Mammary epithelial cell (primary cell): ENCODE measurements at regions of chr1 and their contacts with region 1.

Region 1: DNA sequence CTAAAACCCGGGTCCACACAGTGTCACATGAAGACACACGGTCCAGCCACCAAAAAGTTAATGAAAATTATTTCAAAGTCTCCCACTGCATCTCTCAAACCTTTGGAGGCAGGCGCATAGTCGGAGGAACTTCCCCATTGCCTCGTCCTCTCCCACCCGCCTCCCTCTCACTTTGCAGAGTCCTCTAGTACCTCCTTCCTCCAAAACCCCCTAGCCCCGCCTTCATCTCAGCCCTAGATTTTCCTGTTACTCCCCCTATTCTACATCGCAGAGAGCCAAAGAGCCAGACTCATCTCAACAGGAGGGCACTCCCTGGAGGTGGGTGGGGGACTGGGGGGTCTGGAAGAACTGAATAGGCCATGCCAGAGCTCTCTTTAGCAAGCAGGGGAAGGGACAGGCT is 79.3 kb downstream of the DISP3 start:
- DNase-seq: no peak
- H3K4me3 ChIP-seq: no peak overlapping the region
- H3K27ac ChIP-seq: no peak overlapping the region
- H3K4me1 ChIP-seq: peaks cover 16% of the 10 kb centered on the region
- H3K27me3 ChIP-seq: no peaks in the 10 kb centered on the region
- CTCF ChIP-seq: no peak

Region 2: DNA sequence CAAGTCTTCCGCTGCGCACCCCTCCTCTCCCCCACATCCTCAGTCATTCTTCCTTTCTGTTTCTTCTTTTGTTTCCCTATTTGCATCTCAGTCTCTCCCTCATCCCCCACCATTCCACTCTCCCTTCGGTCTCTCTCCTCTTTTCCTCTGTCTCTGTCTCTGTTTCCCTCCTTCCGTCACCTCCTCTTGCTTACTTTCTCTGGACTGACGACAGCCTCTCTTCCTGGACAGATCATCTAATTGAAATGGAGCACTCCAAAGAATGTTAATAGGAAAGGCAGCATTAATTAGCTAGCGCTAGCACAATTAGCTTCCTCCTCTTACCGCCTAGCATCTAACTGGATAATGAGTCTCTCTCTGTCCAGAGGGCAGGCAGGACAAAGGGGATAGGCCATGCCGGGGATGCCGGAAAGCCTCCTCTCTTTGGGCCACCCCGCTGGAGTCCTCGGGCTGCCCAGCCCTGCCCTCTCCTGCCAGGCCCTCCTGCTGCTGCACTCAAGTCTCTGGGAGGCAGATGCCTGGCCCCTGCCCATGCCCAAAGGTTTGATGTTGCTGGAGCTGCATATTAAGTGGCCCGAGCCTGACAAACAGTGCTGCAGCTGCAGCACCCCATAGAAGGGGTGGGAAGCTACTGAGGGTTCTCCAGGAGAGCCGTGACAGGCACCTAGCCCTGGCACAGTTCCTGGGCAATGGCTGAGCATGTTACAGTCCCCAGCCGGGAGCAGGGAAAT is 58.5 kb before region 1 on chr1:
- CTCF ChIA-PET with region 1: no interaction called
- dilution Hi-C with region 1: loop called (anchors 5 kb)
- in situ Hi-C with region 1: no loop called
- intact Hi-C with region 1: no loop called
- DNase-seq: no peak
- H3K4me3 ChIP-seq: no peak overlapping the region
- H3K27ac ChIP-seq: no peak overlapping the region
- H3K4me1 ChIP-seq: no peaks in the 10 kb centered on the region
- H3K27me3 ChIP-seq: no peaks in the 10 kb centered on the region
- CTCF ChIP-seq: no peak

Region 3: GRCh38 chr1:11522400-11523235 is 35.7 kb before region 1 on chr1:
- CTCF ChIA-PET with region 1: no interaction called
- dilution Hi-C with region 1: loop called (anchors 5 kb)
- in situ Hi-C with region 1: no loop called
- intact Hi-C with region 1: no loop called
- DNase-seq: no peak
- H3K4me3 ChIP-seq: no peak overlapping the region
- H3K27ac ChIP-seq: no peak overlapping the region
- H3K4me1 ChIP-seq: no peaks in the 10 kb centered on the region
- H3K27me3 ChIP-seq: no peaks in the 10 kb centered on the region
- CTCF ChIP-seq: no peak

Region 4: DNA sequence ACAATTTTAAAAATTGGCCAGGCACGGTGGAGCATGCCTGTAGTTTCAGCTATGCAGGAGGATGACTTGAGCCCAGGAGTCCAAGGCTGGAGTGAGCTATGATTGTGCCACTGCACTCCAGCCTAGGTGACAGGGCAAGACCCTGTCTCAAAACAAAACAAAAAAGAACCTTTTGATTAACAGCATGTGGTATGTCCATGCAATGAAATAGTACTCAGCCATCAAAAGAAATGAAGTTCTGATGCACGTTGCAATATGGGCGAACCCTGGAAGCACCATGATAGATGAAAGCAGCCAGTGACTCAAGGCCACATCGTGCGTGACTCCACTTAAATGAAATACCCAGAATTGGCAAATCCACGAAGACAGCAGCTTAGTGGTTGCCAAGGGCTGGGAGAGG is 48.5 kb after region 1 on chr1:
- CTCF ChIA-PET with region 1: no interaction called
- dilution Hi-C with region 1: loop called (anchors 5 kb)
- in situ Hi-C with region 1: no loop called
- intact Hi-C with region 1: loop called (anchors 10 kb)
- DNase-seq: no peak
- H3K4me3 ChIP-seq: no peak overlapping the region
- H3K27ac ChIP-seq: no peak overlapping the region
- H3K4me1 ChIP-seq: no peaks in the 10 kb centered on the region
- H3K27me3 ChIP-seq: no peaks in the 10 kb centered on the region
- CTCF ChIP-seq: no peak